A673 (cell line): ENCODE measurements at regions of chr10 and their contacts with region 1.

Region 1: GRCh38 chr10:72659694-72660093 is 32.2 kb upstream of the MCU start:
- DNase-seq: no peak
- H3K4me3 ChIP-seq: no peak overlapping the region
- H3K27ac ChIP-seq: no peak overlapping the region
- H3K4me1 ChIP-seq: no peaks in the 10 kb centered on the region
- H3K27me3 ChIP-seq: no peaks in the 10 kb centered on the region
- CTCF ChIP-seq: no peak

Region 2: DNA sequence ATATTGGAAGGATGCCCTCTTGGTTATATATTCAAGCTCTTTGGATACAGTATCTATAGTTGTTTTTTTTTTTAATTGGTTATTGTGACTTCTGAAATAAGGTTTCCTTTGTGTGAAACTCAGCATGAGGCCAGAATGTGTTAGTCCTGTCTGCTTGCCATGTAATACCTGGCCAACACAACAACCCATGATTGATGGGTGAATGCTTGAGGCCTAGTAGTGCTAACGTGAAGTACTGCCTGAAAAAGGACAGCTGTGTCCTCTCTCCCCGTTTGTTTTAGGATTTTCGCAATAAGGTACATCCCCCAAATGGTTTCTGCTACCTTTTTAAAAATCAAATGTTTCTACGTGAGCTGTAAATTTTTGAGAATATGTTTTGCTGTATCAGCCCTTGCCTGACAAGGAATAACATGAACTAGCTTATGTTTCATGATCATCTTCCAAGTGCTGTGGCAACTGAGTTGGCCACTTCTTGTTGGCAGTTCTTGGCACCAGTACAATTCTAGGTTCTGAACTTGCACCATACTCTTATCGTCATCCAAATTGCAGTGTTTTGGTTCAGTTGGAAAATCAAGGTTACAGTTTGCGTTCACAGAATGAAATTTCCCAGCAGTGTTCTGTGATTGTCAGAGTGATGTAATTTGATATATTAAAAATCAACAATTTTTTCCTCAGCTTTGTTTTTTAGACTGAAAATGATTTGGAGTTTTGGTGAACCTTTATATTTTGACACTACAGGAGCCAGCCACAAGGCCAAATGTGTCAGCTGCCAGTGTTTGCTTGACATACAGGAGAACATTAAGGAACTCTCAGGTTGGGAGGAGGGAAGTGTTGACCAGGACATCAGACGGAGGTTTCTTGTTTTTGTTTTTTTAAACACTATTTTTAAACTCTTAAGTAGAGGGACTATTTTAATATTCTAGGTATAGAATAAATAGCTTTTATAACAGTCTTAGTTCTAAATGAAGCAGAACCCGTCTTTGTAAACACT is 430.1 kb before region 1 on chr10:
- CTCF ChIA-PET with region 1: no interaction called
- POLR2A ChIA-PET with region 1: no interaction called
- intact Hi-C with region 1: no loop called
- DNase-seq: no peak
- H3K4me3 ChIP-seq: no peak overlapping the region
- H3K27ac ChIP-seq: peak overlapping the region; percentile 7
- H3K4me1 ChIP-seq: peaks cover 22% of the 10 kb centered on the region
- H3K27me3 ChIP-seq: no peaks in the 10 kb centered on the region
- CTCF ChIP-seq: no peak

Region 3: DNA sequence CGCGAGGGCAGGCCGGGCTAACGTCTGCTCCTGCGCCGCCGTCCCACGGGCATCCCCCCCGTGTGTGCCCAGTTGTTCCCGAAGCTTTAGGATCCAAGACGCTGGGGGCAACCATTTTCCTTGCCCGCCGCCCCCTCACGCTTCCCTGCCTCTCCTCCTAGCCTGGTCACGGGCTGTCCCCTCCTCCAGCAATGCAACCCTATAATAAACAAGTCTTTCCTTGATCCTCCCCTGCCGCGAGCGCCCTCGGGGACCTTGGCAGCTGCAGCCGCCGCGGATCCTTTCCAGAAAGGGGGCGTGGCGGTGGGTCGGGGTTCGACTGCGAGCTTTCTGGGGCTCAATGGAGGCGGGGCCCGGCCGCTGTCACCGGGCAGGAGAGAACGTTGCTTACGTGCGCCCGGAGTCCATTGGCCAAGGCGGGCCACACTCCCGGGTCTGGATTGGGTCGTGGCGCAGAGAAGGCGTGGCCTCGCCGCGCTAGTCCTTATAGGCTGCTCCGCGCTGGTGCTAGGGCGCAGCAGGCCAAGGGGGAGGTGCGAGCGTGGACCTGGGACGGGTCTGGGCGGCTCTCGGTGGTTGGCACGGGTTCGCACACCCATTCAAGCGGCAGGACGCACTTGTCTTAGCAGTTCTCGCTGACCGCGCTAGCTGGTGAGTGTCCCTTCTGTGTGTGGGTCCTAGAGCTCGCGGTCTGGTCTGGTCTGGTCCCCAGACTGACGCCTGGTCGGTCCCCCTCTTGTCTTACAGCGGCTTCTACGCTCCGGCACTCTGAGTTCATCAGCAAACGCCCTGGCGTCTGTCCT is 386.1 kb before region 1 on chr10 and contains the start of gene DDIT4:
- CTCF ChIA-PET with region 1: no interaction called
- POLR2A ChIA-PET with region 1: no interaction called
- intact Hi-C with region 1: no loop called
- DNase-seq: peak; percentile 99
- H3K4me3 ChIP-seq: peak within 1 kb of the TSS; percentile 86
- H3K27ac ChIP-seq: peak within 1 kb of the TSS; percentile 95
- H3K4me1 ChIP-seq: peaks cover 33% of the 10 kb centered on the region
- H3K27me3 ChIP-seq: no peaks in the 10 kb centered on the region
- CTCF ChIP-seq: no peak
- total RNA-seq, gene DDIT4: 20.7 and 39.6 TPM in 2 replicates

Region 4: DNA sequence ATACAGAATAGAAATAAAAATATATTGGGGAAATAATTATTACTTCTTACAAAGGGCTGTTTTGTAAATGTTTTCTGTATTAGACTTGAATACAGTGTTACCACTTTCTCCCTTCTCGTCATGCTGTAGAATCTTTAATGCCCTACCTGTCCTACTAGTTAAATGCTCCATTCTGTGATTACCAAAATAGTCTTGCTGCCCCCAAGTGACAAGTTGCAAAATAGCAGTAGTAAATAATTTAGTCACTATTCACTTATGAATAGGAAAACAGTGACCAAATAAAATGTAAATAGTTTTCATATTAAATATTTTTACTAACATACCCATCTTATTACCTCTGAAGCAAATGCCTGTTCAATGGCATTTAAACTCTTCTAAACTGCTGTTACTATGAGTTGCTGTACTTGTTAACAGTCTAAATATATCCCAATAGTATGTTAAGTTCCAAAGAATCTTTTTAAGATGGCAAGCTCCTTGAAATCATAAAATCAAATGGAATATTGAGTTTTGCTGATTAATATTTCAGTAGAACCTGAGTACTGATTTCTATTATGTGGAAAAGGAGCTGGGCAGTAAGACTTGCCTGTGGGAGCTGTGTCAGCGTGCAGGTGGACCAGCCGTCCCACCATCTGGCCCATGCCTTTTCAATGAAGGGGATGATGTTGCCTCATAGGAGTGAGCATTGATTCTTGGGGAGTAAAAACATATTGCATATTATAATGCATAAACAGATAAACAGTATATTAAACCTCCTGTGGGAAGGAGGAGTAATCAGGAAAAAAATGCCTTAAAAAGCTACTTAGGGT is 215.8 kb after region 1 on chr10:
- CTCF ChIA-PET with region 1: no interaction called
- POLR2A ChIA-PET with region 1: no interaction called
- intact Hi-C with region 1: no loop called
- DNase-seq: peak; percentile 43
- H3K4me3 ChIP-seq: no peak overlapping the region
- H3K27ac ChIP-seq: no peak overlapping the region
- H3K4me1 ChIP-seq: no peaks in the 10 kb centered on the region
- H3K27me3 ChIP-seq: no peaks in the 10 kb centered on the region
- CTCF ChIP-seq: peak; percentile 71

Region 5: GRCh38 chr10:72981882-72982529 is 322.3 kb after region 1 on chr10:
- CTCF ChIA-PET with region 1: no interaction called
- POLR2A ChIA-PET with region 1: interaction called, 13 read pairs
- intact Hi-C with region 1: no loop called
- DNase-seq: no peak
- H3K4me3 ChIP-seq: no peak overlapping the region
- H3K27ac ChIP-seq: no peak overlapping the region
- H3K4me1 ChIP-seq: no peaks in the 10 kb centered on the region
- H3K27me3 ChIP-seq: no peaks in the 10 kb centered on the region
- CTCF ChIP-seq: no peak